A549 (cell line): ENCODE measurements at regions of chr7 and their contacts with region 1.

Region 1: GRCh38 chr7:21767300-21767900 is 178.3 kb downstream of the CDCA7L start:
- DNase-seq: peak; percentile 72 to 90
- ATAC-seq: peak; percentile 99
- H3K4me3 ChIP-seq: no peak overlapping the region
- H3K27ac ChIP-seq: no peak overlapping the region
- H3K4me1 ChIP-seq: no peaks in the 10 kb centered on the region
- CTCF ChIP-seq: peak; percentile 95
- EP300 ChIP-seq: no peak
- POLR2A ChIP-seq: no peak
- RAD21 ChIP-seq: peak; percentile 95 to 96

Region 2: DNA sequence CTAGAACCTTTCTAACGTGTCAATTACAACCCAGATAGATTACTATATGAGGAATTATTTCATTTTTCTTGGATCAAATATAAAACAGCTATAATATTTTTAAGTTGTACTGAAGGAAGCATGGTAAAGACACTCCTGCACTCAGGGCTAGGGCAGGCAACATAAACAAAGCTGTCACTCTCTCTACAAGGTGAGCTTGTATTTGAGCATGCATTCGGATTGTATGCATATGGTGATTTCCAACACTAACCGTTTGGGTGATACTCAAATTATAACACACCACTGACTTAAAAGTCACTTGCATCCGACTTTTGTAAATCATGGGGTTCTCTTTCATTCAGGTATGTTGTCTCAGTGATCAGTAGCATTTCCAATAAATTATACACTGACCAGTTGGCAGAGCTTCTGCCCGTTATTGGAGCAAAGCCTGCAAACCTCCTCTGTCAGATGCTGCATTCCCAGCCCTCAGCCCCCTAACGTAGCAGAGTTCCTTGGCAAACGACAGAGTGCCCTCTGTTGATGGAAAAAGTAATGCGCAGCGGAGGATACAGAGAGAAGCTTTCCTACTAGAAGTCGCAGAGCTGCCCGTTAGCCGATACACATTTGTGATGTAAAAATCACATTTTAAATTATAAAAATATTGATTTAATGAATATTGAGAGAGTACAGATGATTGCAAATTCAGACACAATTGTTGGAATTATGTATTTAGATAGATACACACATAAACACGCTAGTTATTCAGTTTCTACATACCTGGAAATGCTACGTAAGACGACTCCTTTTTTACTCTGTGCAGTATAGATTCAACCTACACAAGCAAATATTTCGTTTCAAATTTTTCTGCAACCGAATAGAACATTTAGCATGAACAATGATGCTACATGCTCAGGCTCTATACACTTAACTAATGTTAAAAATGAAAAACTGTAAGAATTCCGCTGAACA is 513.4 kb before region 1 on chr7:
- CTCF ChIA-PET with region 1: interaction called, 227 read pairs
- POLR2A ChIA-PET with region 1: interaction called, 5 read pairs
- DNase-seq: peak; percentile 25 to 50
- ATAC-seq: peak; percentile 85 to 95
- H3K4me3 ChIP-seq: no peak overlapping the region
- H3K27ac ChIP-seq: no peak overlapping the region
- H3K4me1 ChIP-seq: no peaks in the 10 kb centered on the region
- CTCF ChIP-seq: peak; percentile 62
- EP300 ChIP-seq: no peak
- POLR2A ChIP-seq: no peak
- RAD21 ChIP-seq: peak; percentile 61 to 66

Region 3: DNA sequence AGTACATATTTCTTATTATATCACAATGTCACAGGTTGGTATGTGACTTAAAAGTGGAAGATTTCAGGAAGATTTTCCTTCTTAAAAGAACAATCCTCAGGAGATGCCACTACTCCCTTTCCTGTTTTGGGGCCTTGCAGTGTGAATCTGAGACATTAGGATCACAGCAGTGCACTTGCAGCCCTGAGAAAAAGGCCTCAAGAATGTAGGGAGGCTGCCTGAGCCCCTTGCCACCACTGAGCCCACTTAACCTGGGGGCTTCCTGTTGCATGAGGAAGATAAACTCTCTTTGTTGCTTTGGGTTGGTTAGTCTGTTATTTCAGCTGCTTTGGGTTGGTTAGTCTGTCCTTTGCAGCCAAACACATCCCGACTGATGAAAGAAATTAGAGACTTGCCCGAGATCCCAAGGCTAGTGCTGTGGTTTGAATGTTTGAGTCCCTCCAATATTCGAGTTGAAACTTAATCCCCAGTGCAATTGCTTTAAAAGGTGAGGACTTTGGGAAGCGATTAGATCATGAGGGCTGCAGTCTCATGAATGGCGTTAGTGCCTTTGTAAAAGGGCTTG is 490.8 kb before region 1 on chr7:
- CTCF ChIA-PET with region 1: interaction called, 11 read pairs
- POLR2A ChIA-PET with region 1: no interaction called
- DNase-seq: no peak
- ATAC-seq: no peak
- H3K4me3 ChIP-seq: no peak overlapping the region
- H3K27ac ChIP-seq: no peak overlapping the region
- H3K4me1 ChIP-seq: no peaks in the 10 kb centered on the region
- CTCF ChIP-seq: no peak
- EP300 ChIP-seq: no peak
- POLR2A ChIP-seq: no peak
- RAD21 ChIP-seq: no peak

Region 4: DNA sequence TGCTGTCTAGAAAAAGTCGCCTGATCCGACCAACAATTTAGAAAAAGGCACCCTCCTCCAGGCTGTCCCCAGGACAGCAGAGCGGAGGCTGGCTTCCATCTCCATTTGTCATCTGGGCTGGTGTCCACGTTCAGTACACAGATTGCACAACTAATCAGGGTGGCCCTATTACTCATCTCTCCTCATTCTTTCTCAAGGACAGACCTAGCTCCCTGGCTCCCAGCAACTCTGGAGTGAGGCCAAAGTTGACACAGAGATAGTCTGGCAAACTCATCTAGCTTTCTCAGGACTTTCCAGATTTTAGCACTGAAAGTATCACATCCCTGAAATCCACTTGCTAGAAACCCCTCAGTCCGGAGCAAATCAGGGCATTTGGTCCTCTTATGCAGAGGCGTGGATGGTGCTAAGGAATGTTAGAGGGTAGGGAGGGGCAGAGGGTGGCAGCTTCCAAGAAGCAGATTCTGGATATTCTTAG is 149.4 kb before region 1 on chr7:
- CTCF ChIA-PET with region 1: no interaction called
- POLR2A ChIA-PET with region 1: no interaction called
- DNase-seq: peak; percentile 69 to 87
- ATAC-seq: peak; percentile 90 to 97
- H3K4me3 ChIP-seq: peak overlapping the region; percentile 35
- H3K27ac ChIP-seq: peak overlapping the region; percentile 82 to 89
- H3K4me1 ChIP-seq: peaks cover 29% of the 10 kb centered on the region
- CTCF ChIP-seq: no peak
- EP300 ChIP-seq: peak; percentile 84 to 87; a peak in 4 of 5 replicates
- POLR2A ChIP-seq: no peak
- RAD21 ChIP-seq: peak in 1 of 2 experiments; percentile 36; a peak in 3 of 5 replicates

Region 5: DNA sequence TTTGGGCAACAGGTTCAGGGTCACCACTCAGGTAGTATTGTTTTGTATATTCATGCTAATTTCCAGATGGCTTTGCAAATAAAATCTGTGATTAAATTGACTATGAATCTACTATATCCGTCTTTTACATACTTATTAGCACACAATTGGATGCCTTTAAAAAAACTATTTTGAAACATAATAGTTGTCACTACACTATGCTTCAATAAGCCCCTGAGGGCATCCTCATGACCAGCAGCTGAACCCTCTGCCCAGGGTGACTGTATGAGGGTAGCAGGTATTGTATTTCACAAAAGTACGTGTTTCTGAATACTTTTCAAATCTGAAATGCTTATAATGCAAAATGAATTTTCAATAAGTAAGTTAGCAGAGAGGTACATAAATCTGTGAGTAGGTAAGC is 127.3 kb before region 1 on chr7:
- CTCF ChIA-PET with region 1: no interaction called
- POLR2A ChIA-PET with region 1: no interaction called
- DNase-seq: no peak
- ATAC-seq: no peak
- H3K4me3 ChIP-seq: no peak overlapping the region
- H3K27ac ChIP-seq: no peak overlapping the region; a peak in 1 of 6 replicates
- H3K4me1 ChIP-seq: peaks cover 8% of the 10 kb centered on the region; the same call in 2 of the 3 replicates
- CTCF ChIP-seq: no peak
- EP300 ChIP-seq: no peak
- POLR2A ChIP-seq: no peak
- RAD21 ChIP-seq: no peak

Region 6: DNA sequence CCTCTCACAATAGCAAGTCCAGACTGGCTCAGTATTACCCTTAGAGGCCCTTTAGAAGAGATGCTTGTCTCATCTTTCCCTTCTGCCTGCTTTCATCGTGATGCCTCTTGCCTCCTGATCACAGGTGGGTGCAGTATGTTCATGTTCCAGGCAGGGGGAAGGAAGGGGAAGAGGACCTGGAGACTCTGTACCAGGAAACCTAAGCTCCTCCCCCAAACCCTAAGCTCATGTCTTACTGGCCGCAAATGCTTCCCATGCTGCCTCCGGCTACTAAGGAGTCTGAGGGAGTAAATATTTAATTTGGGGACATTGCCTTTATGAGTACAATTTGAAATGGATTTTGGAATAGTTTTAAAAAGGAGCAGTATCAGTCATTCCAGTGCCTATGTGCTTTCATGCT is 14.3 kb before region 1 on chr7:
- CTCF ChIA-PET with region 1: interaction called, 10 read pairs
- POLR2A ChIA-PET with region 1: no interaction called
- DNase-seq: no peak
- ATAC-seq: no peak
- H3K4me3 ChIP-seq: no peak overlapping the region
- H3K27ac ChIP-seq: no peak overlapping the region
- H3K4me1 ChIP-seq: no peaks in the 10 kb centered on the region
- CTCF ChIP-seq: no peak
- EP300 ChIP-seq: no peak
- POLR2A ChIP-seq: no peak
- RAD21 ChIP-seq: no peak

Region 7: DNA sequence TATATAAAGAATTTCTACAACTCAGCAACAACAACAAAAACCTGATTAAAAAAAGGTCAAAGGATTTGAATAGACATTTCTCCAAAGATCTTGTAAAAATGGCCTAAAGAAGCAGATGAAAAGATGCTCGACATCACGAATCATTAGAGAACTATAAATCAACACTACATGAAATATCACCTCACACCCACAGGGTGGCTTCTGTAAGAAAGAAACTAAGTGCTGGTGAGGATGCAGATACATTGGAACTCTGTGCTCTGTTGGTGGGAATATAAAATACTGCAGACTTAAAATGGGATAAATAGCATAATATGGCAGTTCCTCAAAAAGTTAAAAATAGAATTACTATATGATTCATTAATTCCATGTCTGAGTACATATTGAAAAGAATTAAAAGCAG is 216.6 kb after region 1 on chr7:
- CTCF ChIA-PET with region 1: no interaction called
- POLR2A ChIA-PET with region 1: no interaction called
- DNase-seq: no peak
- ATAC-seq: no peak
- H3K4me3 ChIP-seq: no peak overlapping the region
- H3K27ac ChIP-seq: no peak overlapping the region
- H3K4me1 ChIP-seq: no peaks in the 10 kb centered on the region
- CTCF ChIP-seq: no peak
- EP300 ChIP-seq: no peak
- POLR2A ChIP-seq: no peak
- RAD21 ChIP-seq: no peak